Mucosa of descending colon (tissue), 3 donors: ENCODE measurements at regions of chr6 and their contacts with region 1.

Region 1: GRCh38 chr6:27188885-27189418 is 58.5 kb upstream of the PRSS16 start:
- DNase-seq: peak in 1 of 3 donors; percentile 85
- ATAC-seq: peak; percentile 93
- H3K4me3 ChIP-seq: peak overlapping the region; percentile 26
- H3K4me1 ChIP-seq: no peaks in the 10 kb centered on the region
- CTCF ChIP-seq: peak; percentile 26

Region 2: GRCh38 chr6:27472617-27473400 is 283.9 kb after region 1 on chr6 and contains the start of gene ZNF184:
- intact Hi-C with region 1: loop called in 1 of 2 experiments (anchors 10 kb)
- DNase-seq: peak; percentile 97 to 98 (median 97)
- ATAC-seq: peak; percentile 97
- H3K4me3 ChIP-seq: peak within 1 kb of the TSS; percentile 54
- H3K4me1 ChIP-seq: peaks cover 12% of the 10 kb centered on the region
- CTCF ChIP-seq: no peak
- total RNA-seq, gene ZNF184: 6.0 to 7.0 (median 6.2) TPM